ENCODE measurements at regions of chr5 and their contacts with region 1.

Region 1: DNA sequence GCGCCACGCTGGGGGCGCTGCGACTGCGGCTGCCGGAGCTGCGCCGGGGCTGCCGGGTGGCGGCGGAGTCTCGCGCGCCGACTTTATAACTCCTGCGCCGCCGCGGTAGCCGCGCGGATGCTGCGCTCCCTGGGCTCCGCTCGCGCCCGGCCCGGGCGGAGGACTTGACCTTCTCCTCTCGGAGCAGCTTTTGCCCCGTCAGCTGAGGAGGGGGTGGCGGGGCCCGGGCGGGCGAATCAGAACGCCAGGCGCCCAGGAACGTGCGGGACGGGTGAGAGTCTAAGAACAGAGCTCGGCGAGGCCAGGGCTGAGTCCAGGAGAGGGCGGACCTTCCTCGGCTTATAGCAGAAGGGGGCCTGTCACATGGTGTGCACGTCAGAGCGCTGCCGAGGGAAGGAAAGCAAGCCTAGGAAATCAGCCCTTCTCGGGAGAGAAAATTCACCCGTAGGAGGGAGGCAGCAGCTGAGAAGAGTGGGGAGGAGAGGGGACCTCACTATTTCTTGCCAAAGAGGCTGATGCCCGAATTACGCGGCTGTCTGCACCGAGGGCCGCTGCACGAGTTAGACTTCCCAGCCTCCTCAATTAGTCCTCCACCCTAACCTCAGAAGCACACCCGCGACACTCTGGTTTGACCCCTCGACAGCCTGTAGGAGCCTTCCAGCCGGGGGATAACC is at the start of gene FOXD1:
- DNase-seq: peak; percentile 31
- H3K4me3 Mint-ChIP-seq: peak within 1 kb of the TSS; percentile 76
- H3K27ac Mint-ChIP-seq: no peak within 1 kb of the TSS
- H3K4me1 Mint-ChIP-seq: peaks cover 6% of the 10 kb centered on the region
- H3K27me3 Mint-ChIP-seq: peaks cover 69% of the 10 kb centered on the region
- total RNA-seq, gene FOXD1: 0.11 and 0.25 TPM in 2 replicates

Region 2: GRCh38 chr5:73233347-73234200 is 215.0 kb before region 1 on chr5:
- intact Hi-C with region 1: loop called (anchors 5 kb)
- DNase-seq: no peak
- H3K4me3 Mint-ChIP-seq: no peak overlapping the region
- H3K27ac Mint-ChIP-seq: no peak overlapping the region
- H3K4me1 Mint-ChIP-seq: peaks cover 1% of the 10 kb centered on the region
- H3K27me3 Mint-ChIP-seq: peaks cover 68% of the 10 kb centered on the region

Region 3: GRCh38 chr5:73381590-73382400 is 66.8 kb before region 1 on chr5:
- intact Hi-C with region 1: loop called (anchors 2 kb)
- DNase-seq: no peak
- H3K4me3 Mint-ChIP-seq: no peak overlapping the region
- H3K27ac Mint-ChIP-seq: no peak overlapping the region
- H3K4me1 Mint-ChIP-seq: peaks cover 3% of the 10 kb centered on the region
- H3K27me3 Mint-ChIP-seq: peaks cover 65% of the 10 kb centered on the region

Region 4: GRCh38 chr5:73405691-73406090 is 42.9 kb before region 1 on chr5:
- intact Hi-C with region 1: no loop called
- DNase-seq: no peak
- H3K4me3 Mint-ChIP-seq: no peak overlapping the region
- H3K27ac Mint-ChIP-seq: no peak overlapping the region
- H3K4me1 Mint-ChIP-seq: no peaks in the 10 kb centered on the region
- H3K27me3 Mint-ChIP-seq: peaks cover 32% of the 10 kb centered on the region

Region 5: DNA sequence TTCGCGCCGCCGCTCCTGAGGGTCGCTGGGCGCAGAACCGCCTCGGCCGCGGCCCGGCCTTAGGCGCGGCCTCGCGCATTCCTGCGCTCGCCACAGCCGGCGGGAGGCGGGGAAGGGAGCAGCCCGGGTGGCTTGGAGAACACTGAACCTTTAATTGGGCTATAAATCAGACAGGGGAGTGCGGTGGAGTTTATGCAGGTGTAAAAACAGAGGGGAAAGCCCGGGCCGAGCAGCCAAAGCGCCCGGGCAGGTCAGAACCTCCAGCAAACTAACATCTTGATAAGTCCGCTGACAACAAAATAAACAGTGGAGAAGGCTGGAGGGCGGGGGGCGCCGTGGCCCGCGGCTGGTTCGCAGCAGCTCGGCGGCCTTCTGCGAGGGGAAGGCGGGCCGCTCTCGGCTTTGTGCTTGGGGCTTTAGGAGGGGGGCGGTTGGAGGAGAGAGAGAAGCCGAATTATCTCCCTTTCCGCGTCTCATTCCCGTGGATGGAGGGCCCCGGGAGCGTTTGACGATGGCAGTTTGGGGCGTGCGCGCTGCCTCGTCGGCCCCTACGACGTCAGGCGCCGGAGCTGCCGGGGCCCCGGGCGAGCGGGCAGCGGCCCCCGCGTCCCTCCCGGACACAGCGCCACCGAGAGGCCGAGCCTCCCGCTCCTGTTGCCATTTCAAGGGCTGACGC is 11.4 kb before region 1 on chr5:
- intact Hi-C with region 1: loop called (anchors 2 kb)
- DNase-seq: no peak
- H3K4me3 Mint-ChIP-seq: no peak overlapping the region
- H3K27ac Mint-ChIP-seq: no peak overlapping the region
- H3K4me1 Mint-ChIP-seq: peaks cover 3% of the 10 kb centered on the region
- H3K27me3 Mint-ChIP-seq: peaks cover 80% of the 10 kb centered on the region

Region 6: GRCh38 chr5:73674669-73675004 is 226.0 kb after region 1 on chr5:
- intact Hi-C with region 1: no loop called
- DNase-seq: no peak
- H3K4me3 Mint-ChIP-seq: no peak overlapping the region
- H3K27ac Mint-ChIP-seq: no peak overlapping the region
- H3K4me1 Mint-ChIP-seq: no peaks in the 10 kb centered on the region
- H3K27me3 Mint-ChIP-seq: peaks cover 4% of the 10 kb centered on the region

Measured in activated T-helper 2 cell treated with anti-CD3 and anti-CD28 coated beads, Interferon-gamma antibody, Interleukin-2, Interleukin-4, amounts not matched to agents 10 μg/mL and 5 μg/mL and 100 μg/mL, durations not matched to agents 14 hours and 24 hours and 36 hours (primary cell).